ENCODE measurements at regions of chr1 and their contacts with region 1.

Region 1: GRCh38 chr1:91529856-91530255 is 29.2 kb downstream of the CDC7 start:
- DNase-seq: peak; percentile 67
- H3K4me3 Mint-ChIP-seq: no peak overlapping the region
- H3K27ac Mint-ChIP-seq: peak overlapping the region; percentile 70
- H3K4me1 Mint-ChIP-seq: peaks cover 14% of the 10 kb centered on the region
- H3K27me3 Mint-ChIP-seq: no peaks in the 10 kb centered on the region
- CTCF ChIP-seq: peak; percentile 60

Region 2: DNA sequence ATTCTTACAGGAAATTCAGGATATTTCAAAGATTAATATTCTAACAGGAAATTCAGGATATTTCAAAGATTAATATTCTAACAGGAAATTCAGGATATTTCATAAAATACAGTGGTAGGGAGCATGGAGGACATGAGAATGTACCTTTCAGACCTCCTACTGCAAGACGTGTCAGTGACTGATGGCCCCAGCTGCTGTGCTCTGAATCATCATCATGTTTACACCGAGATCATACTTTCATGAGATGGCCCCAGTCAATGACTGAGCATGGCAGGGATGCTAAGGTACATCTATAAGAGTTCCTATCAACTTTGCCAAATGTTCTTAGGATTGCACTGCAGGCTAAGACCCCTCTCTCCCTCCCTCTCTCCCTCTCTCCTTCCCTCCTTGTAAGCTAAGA is 194.3 kb before region 1 on chr1:
- CTCF ChIA-PET with region 1: no interaction called
- POLR2A ChIA-PET with region 1: no interaction called
- intact Hi-C with region 1: no loop called
- DNase-seq: no peak
- H3K4me3 Mint-ChIP-seq: no peak overlapping the region
- H3K27ac Mint-ChIP-seq: no peak overlapping the region
- H3K4me1 Mint-ChIP-seq: no peaks in the 10 kb centered on the region
- H3K27me3 Mint-ChIP-seq: peaks cover 57% of the 10 kb centered on the region
- CTCF ChIP-seq: no peak

Region 3: DNA sequence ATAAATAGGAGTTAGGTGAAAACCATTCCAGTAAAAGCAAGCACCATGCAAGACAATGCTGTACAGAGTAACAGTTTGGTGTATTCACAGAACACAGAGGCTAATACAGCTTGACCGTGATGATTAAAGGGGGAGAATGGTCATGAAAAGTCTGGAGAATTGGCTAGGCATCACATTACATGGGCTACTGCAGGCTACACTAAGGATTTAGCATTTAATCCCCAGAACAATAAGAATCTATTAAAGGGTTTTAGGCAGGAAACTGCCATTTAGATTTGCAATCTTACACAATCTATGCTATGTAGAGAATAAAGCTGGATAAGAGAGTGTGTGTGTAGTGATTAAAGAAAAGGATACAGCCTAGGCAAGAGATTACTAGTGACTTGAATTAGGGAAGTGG is 155.8 kb before region 1 on chr1:
- CTCF ChIA-PET with region 1: no interaction called
- POLR2A ChIA-PET with region 1: no interaction called
- intact Hi-C with region 1: no loop called
- DNase-seq: no peak
- H3K4me3 Mint-ChIP-seq: no peak overlapping the region
- H3K27ac Mint-ChIP-seq: no peak overlapping the region
- H3K4me1 Mint-ChIP-seq: no peaks in the 10 kb centered on the region
- H3K27me3 Mint-ChIP-seq: peaks cover 44% of the 10 kb centered on the region
- CTCF ChIP-seq: no peak

Region 4: DNA sequence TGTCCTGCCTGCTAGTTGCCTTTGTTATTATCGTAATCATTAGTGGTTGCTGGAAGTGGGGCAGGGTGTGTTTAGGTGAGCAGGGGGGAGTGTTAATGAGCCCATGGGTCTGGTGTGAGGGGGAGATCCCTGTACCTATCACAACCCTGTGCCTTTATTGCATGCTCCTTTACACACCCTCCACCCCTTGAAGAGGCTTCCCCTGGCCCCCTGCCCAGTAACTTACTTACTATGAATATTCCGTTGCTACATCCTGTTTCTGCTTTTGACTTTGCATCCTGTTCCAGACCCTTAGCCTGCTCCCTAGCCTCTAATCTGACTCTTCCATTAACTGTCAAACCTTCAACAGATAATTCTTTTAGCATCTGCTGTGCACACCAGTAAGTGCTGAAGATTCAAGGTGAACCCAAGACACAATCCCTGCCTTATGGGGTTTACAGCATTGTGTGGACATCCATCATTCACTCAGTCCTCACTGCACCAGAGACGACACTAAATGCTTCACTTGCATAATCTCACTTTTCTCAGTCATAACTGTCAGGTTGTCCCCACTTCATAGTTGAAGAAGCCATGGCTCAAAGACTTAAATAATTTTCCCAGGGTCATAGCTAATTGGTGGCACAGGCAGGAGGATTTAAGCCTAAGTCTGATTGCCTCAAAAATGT is 18.7 kb after region 1 on chr1:
- CTCF ChIA-PET with region 1: no interaction called
- POLR2A ChIA-PET with region 1: no interaction called
- intact Hi-C with region 1: no loop called
- DNase-seq: no peak
- H3K4me3 Mint-ChIP-seq: no peak overlapping the region
- H3K27ac Mint-ChIP-seq: no peak overlapping the region
- H3K4me1 Mint-ChIP-seq: peaks cover 26% of the 10 kb centered on the region
- H3K27me3 Mint-ChIP-seq: no peaks in the 10 kb centered on the region
- CTCF ChIP-seq: no peak

Region 5: GRCh38 chr1:91569411-91570119 is 39.7 kb after region 1 on chr1:
- CTCF ChIA-PET with region 1: interaction called, 13 read pairs
- POLR2A ChIA-PET with region 1: interaction called, 8 read pairs
- intact Hi-C with region 1: no loop called
- DNase-seq: peak; percentile 90
- H3K4me3 Mint-ChIP-seq: peak overlapping the region; percentile 64
- H3K27ac Mint-ChIP-seq: peak overlapping the region; percentile 98
- H3K4me1 Mint-ChIP-seq: peaks cover 16% of the 10 kb centered on the region
- H3K27me3 Mint-ChIP-seq: no peaks in the 10 kb centered on the region
- CTCF ChIP-seq: no peak

Region 6: DNA sequence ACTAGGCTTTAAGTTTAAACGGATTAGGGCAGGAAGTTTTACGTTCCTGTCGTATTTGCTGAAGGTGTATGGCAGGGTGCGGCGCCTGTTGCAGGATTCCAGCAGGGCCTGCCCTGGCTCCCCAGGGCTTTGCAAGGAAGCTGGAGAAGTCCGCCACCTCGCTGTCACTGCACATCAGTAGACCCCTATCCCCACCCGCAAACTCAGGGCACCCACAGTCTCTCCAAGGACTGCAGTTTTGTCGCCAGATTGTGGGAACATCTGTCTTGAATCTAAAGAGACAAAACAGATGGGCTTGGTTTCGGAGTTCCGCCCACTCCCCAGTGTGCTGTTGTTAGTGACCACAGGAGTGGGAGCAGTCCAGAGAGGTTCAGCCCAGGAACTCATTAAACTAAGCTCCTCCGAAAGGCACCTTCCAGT is 81.7 kb after region 1 on chr1:
- CTCF ChIA-PET with region 1: interaction called, 35 read pairs
- POLR2A ChIA-PET with region 1: interaction called, 16 read pairs
- intact Hi-C with region 1: loop called (anchors 2 kb)
- DNase-seq: peak; percentile 18
- H3K4me3 Mint-ChIP-seq: no peak overlapping the region
- H3K27ac Mint-ChIP-seq: peak overlapping the region; percentile 74
- H3K4me1 Mint-ChIP-seq: peaks cover 45% of the 10 kb centered on the region
- H3K27me3 Mint-ChIP-seq: no peaks in the 10 kb centered on the region
- CTCF ChIP-seq: no peak

Region 7: GRCh38 chr1:91924146-91924545 is 394.3 kb after region 1 on chr1:
- CTCF ChIA-PET with region 1: interaction called, 61 read pairs
- POLR2A ChIA-PET with region 1: interaction called, 5 read pairs
- intact Hi-C with region 1: loop called (anchors 1 kb)
- DNase-seq: peak; percentile 67
- H3K4me3 Mint-ChIP-seq: no peak overlapping the region
- H3K27ac Mint-ChIP-seq: peak overlapping the region; percentile 87
- H3K4me1 Mint-ChIP-seq: peaks cover 17% of the 10 kb centered on the region
- H3K27me3 Mint-ChIP-seq: no peaks in the 10 kb centered on the region
- CTCF ChIP-seq: no peak

Region 8: GRCh38 chr1:91929250-91929649 is 399.4 kb after region 1 on chr1:
- CTCF ChIA-PET with region 1: interaction called, 61 read pairs
- POLR2A ChIA-PET with region 1: interaction called, 5 read pairs
- intact Hi-C with region 1: loop called (anchors 1 kb)
- DNase-seq: no peak
- H3K4me3 Mint-ChIP-seq: no peak overlapping the region
- H3K27ac Mint-ChIP-seq: no peak overlapping the region
- H3K4me1 Mint-ChIP-seq: peaks cover 13% of the 10 kb centered on the region
- H3K27me3 Mint-ChIP-seq: no peaks in the 10 kb centered on the region
- CTCF ChIP-seq: no peak